ENCODE measurements at regions of chr6 and their contacts with region 1.

Region 1: DNA sequence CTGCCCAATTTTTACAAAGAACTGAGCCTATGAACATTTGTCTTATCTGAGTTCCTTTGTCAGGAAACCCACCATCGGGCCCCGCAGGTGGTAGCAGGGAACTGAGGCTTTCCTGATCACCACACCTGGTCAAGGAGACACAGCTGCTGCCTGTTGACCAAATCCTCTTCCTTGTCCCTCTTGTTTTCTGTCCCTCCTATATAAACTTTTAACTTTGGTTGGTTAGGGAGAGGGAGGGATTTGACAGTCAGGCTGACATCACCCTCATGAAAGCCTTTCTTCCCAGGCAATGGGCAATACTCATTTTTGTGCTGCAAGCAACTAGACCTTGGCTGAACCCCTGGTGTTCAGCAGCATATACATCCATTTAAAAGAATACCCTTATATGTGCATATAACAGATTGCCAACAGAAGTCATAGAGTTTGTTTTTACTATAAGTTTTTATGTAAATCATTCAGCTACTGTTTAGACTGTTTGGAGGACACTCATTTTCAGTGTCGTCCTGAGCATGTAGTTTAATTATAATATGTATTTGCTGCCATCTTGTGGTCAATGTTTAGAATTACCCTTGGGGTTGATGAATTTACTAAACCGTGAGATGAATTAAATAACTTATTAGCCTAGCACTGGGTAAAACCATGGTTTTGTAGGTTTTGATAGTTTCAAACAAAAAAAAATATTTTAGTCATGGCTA is 17.0 kb downstream of the CRISP1 start:
- DNase-seq: peak; percentile 20
- CTCF ChIP-seq: peak; percentile 39

Region 2: DNA sequence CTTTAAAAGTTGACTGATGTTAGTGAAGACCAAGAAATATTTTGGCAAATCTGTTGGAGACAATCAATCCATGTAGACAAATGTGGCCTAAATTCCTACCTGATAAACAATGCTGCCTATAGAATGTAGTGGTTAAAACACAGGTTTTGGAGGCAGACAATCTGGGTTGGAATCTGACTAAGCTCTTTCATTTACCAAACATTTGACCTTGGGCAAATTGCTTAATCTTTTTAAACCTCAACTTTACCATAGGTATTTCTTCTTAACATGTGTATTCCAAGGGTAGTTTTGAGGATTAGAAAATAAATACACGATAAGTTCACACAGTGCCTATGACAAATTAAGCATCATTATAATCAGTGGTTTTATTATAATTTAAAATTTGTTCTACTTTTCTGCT is 224.2 kb before region 1 on chr6:
- in situ Hi-C with region 1: loop called (anchors 5 kb)
- DNase-seq: no peak
- CTCF ChIP-seq: no peak

Region 3: GRCh38 chr6:50288881-50289280 is 439.5 kb after region 1 on chr6:
- in situ Hi-C with region 1: no loop called
- DNase-seq: no peak
- CTCF ChIP-seq: no peak

Region 4: DNA sequence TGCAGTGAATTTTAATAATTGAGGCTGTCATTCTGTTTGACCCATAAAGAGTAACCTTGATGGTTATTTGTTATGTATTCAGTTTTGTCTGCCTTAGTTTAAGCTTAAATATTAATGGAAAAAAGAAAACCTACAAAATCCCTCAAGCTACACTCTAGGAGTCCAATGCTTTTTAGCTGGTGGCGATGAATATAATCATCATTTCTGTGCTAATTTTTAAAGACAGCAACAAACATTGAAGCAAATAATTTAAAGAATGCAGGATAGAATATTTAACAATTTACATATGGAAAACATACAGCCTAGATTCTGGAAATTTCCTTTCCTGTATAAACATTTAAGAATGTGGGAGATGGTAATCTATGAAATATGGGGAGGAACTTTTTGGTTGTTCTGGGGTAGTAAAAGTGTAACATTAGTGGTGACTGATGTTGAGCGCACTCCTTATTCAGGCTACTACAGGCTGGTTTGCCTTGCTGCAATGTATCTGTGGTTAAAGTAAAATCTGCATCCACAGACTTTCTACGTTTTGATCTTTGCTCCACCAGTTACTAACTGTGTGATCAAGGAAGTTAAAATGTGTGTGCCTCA is 488.3 kb after region 1 on chr6:
- in situ Hi-C with region 1: no loop called
- DNase-seq: no peak
- CTCF ChIP-seq: no peak

Measured in GM13976 (cell line).